Activated T-helper 1 cell treated with anti-CD3 and anti-CD28 coated beads, Interleukin-12 subunit alpha, Interleukin-12 subunit beta, Interleukin-2, Interleukin-4 antibody, amounts not matched to agents 30 ng/mL and 10 ng/mL and 1 ng/mL, durations not matched to agents 14 hours and 24 hours and 36 hours (primary cell): ENCODE measurements at regions of chr10 and their contacts with region 1.

Region 1: DNA sequence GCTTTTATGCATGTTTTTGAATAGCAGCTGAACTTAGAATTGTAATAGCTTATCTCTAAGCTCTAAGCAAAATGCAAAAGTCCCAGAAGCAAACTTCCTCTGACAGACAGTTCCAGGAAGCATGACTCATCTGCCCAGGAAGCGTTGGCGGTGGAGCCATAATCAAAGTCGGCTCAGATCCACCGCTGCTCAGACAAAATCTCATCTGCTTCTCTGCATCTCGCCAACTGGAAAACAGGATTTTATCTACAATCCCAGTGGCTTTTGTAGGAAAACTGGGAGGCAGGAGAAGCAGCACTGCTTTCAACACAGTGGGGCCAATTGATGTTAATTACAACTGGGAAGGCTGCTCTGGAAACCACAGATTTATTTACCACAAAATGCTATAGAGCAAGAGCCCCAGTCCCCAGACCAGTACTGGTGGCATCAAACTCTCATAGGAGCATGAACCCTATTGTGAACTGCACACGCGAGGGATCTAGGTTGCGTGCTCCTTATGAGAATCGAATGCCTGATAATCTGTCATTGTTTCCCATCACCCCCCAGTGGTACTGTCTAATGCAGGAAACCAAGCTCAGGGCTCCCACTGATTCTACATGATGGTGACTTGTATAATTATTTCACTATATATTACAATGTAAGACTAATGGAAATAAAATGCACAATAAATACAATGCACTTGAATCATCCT is 99.9 kb downstream of the CUBN start:
- DNase-seq: peak; percentile 72
- H3K4me3 Mint-ChIP-seq: peak overlapping the region; percentile 73
- H3K27ac Mint-ChIP-seq: peak overlapping the region; percentile 73
- H3K4me1 Mint-ChIP-seq: peaks cover 80% of the 10 kb centered on the region
- H3K27me3 Mint-ChIP-seq: peaks cover 8% of the 10 kb centered on the region

Region 2: DNA sequence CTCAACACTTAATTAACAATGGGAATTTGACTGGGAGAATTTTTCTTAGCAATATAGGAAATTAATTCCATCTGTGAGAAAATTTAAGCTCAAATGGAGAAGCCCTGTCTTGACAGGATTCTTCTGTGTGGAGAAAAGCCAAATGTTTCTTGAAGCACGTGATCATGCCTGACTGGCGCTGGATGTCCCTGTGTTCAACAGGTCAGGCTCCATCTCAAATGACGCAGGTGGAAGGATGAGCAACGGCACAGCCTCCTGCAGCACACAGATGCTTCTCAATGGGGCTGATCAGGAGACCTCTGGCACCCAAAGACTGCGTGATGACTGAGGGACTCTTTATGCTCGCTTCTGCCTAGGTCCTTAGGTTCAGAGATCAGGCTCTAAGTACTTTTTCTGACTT is 356.3 kb before region 1 on chr10:
- intact Hi-C with region 1: no loop called
- DNase-seq: no peak
- H3K4me3 Mint-ChIP-seq: no peak overlapping the region
- H3K27ac Mint-ChIP-seq: no peak overlapping the region
- H3K4me1 Mint-ChIP-seq: no peaks in the 10 kb centered on the region
- H3K27me3 Mint-ChIP-seq: no peaks in the 10 kb centered on the region

Region 3: DNA sequence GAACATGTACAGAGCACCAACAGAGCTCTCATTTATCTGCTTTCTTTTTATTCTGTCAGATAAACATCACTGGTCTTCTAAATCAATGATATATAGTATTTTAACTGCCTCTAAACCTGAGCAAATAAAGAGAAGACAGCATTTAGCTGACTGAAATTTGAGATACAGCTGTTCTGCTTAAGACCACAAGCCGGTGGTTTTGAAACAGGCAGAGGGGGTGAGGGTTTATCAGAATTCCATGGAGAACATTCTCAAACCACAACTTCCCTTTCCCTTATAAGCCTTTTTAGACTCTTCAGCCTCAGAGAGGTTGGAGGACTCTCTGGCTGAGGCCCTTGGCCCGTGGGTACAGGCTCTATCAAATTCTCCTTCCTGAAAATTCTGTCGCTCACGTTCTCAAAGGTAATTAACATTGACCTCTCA is 125.1 kb before region 1 on chr10:
- intact Hi-C with region 1: loop called (anchors 1 kb)
- DNase-seq: no peak
- H3K4me3 Mint-ChIP-seq: no peak overlapping the region
- H3K27ac Mint-ChIP-seq: no peak overlapping the region
- H3K4me1 Mint-ChIP-seq: peaks cover 9% of the 10 kb centered on the region
- H3K27me3 Mint-ChIP-seq: peaks cover 7% of the 10 kb centered on the region

Region 4: DNA sequence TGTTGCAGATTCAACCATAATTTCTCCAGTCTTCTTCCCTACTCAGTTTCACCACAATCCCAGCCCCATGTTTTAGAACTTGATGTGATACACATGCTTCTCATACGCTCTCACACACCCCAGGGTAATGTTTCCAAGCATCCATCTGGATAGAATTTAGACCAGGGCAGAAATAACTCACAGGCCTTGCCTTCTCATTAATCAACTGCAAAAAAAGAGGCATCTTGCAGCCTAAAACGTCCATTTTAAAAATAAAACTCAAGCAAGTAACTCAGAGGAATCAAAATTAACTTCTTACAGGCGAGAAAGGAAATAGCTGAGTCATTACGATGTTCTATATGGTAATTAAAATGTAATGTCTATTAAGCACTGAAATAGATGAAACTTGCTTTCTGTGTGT is 85.3 kb before region 1 on chr10:
- intact Hi-C with region 1: no loop called
- DNase-seq: no peak
- H3K4me3 Mint-ChIP-seq: no peak overlapping the region
- H3K27ac Mint-ChIP-seq: no peak overlapping the region
- H3K4me1 Mint-ChIP-seq: no peaks in the 10 kb centered on the region
- H3K27me3 Mint-ChIP-seq: peaks cover 11% of the 10 kb centered on the region

Region 5: GRCh38 chr10:17062955-17063484 is 33.3 kb after region 1 on chr10:
- intact Hi-C with region 1: loop called (anchors 1 kb)
- DNase-seq: no peak
- H3K4me3 Mint-ChIP-seq: no peak overlapping the region
- H3K27ac Mint-ChIP-seq: no peak overlapping the region
- H3K4me1 Mint-ChIP-seq: peaks cover 42% of the 10 kb centered on the region
- H3K27me3 Mint-ChIP-seq: peaks cover 17% of the 10 kb centered on the region

Region 6: DNA sequence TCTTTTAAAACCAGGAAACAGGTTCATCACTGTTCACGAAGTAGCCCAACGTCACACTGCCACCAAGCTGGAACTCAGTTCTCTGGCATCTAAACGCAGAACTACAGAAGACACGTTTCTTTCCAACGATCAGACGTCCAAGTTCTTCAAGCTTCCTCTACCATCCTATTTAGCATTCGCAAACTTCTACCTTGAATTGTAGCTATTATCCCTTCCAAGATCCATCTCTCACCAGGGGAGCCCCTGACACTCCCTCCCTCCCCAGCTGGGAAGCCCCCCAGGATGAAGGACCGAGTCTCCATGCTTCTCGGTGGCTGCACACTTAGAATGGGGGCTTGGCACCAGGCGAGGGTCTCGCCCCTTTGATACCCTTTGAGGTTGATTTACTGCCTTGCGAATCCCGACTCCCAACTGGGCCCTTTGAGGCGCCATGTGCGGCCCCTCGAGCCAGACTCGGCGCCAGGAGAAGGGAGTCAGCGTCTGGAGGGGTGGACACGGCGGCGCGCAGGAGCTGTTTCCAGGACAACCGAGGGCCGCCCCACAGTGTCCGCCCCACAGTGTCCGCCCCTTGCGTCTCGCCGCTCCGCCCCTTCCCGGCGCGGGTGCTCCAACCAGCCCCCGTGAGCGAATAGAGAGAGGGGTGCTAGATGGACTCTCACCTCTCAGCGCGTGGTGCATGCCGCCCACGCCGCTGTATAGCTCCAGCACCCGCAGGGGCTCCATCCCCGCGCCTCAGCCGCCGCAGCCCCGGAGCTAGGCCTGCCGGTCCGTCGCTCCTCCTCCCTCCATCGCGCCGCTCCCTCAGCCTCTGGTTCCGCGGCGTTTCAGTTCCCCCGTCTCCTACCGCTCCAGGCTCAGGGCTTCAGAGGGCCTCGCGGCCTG is 171.4 kb after region 1 on chr10 and contains the start of gene TRDMT1:
- intact Hi-C with region 1: loop called (anchors 1 kb)
- DNase-seq: peak; percentile 78
- H3K4me3 Mint-ChIP-seq: peak within 1 kb of the TSS; percentile 84
- H3K27ac Mint-ChIP-seq: peak within 1 kb of the TSS; percentile 77
- H3K4me1 Mint-ChIP-seq: peaks cover 27% of the 10 kb centered on the region
- H3K27me3 Mint-ChIP-seq: peaks cover 2% of the 10 kb centered on the region
- total RNA-seq, gene TRDMT1: 3.3 and 4.2 TPM in 2 replicates

Region 7: DNA sequence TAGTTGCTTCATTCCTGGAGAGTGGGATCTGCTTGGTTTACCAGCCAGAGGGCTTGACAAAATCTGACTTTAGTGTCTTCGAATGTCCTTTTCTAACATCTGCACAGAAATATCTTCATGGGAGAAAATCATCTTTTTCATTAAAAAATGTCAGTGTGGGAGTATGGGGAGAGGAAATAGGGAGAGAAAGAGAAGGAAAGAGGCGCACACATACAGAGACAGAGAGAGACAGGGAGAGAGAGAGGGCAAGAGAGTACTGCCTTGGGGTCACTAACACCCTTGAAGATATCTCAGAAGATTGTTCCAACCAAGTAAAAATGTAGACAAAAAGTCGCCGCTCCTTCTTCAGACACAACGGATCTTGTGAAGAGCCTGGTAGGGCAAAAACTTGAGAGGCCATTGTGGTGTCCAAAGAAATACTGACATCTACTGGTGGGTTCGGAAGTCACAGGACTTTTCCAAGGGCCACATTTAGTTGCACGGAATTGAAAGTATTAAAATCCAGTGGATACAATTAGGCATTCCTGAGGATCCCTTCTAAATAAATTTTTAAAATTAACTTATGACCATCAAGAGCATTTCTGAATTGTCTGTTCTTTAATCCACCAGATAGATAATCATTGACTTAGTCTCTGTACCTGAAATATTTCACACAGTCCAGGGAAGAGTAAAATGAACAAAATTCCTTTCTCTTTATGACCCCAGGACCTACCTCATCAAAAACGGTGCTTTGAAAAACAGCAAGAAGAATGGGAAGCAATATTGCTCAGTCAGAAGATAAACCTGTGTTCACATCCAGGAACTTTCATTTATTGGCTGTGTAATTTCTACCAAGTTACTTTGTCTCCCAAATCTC is 228.0 kb after region 1 on chr10:
- intact Hi-C with region 1: loop called (anchors 1 kb)
- DNase-seq: peak; percentile 52
- H3K4me3 Mint-ChIP-seq: no peak overlapping the region
- H3K27ac Mint-ChIP-seq: no peak overlapping the region
- H3K4me1 Mint-ChIP-seq: peaks cover 17% of the 10 kb centered on the region
- H3K27me3 Mint-ChIP-seq: peaks cover 10% of the 10 kb centered on the region

Region 8: DNA sequence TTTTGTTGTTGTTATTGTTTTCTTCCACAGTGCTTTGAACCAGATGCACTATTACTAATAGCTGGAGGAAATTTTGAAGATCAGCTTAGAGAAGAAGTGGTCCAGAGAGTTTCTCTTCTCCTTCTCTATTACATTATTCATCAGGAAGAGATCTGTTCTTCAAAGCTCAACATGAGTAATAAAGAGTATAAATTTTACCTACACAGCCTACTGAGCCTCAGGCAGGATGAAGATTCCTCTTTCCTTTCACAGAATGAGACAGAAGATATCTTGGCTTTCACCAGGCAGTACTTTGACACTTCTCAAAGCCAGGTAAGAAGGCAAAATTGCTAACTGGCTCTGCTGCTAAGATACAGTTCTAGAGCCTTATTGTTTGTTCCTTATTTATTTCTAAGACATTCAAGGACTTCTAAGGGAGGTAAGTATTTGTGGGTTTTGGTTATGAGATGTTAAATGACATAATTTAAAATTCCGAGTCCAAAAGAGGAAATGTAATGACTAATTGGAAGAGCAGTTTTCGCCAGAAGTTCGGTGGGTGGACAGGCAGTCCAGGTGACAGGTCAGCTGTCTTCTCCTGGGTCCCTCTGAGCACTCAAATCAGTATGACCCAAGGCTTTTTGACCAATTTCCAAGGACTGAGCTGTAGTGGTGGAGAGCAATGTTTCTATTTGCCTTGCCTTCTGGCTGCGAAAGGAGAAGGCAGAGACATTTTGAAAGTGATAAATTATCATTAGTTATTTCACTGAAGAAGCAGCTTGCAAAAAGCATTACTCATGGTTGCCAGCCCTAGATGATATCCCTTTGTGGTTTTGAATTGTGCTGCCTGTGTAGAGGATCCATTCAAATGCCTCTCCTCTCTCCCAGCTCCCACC is 932.1 kb after region 1 on chr10:
- intact Hi-C with region 1: no loop called
- DNase-seq: no peak
- H3K4me3 Mint-ChIP-seq: no peak overlapping the region
- H3K27ac Mint-ChIP-seq: no peak overlapping the region
- H3K4me1 Mint-ChIP-seq: no peaks in the 10 kb centered on the region
- H3K27me3 Mint-ChIP-seq: no peaks in the 10 kb centered on the region